ENCODE measurements at regions of chr1 and their contacts with region 1.

Region 1: GRCh38 chr1:23184212-23184934 is 15.7 kb upstream of the LUZP1 start:
- ATAC-seq: peak; percentile 19 to 79 (median 38)
- H3K4me3 ChIP-seq: no peak overlapping the region
- H3K27ac ChIP-seq: no peak overlapping the region
- H3K4me1 ChIP-seq: no peaks in the 10 kb centered on the region

Region 2: GRCh38 chr1:22673486-22674409 is 510.6 kb before region 1 on chr1:
- in situ Hi-C with region 1: loop called in 4 of 9 experiments (anchors 10 to 25 kb)
- ATAC-seq: peak; percentile 63 to 88 (median 86)
- H3K4me3 ChIP-seq: peak overlapping the region in 1 of 5 donors; percentile 3
- H3K27ac ChIP-seq: peak overlapping the region; percentile 57 to 86
- H3K4me1 ChIP-seq: peaks cover 20 to 29% of the 10 kb centered on the region in 2 donors

Region 3: GRCh38 chr1:22976461-22977243 is 207.7 kb before region 1 on chr1:
- in situ Hi-C with region 1: loop called in 3 of 9 experiments (anchors 10 to 25 kb)
- ATAC-seq: peak; percentile 79 to 96 (median 87)
- H3K4me3 ChIP-seq: no peak overlapping the region
- H3K27ac ChIP-seq: no peak overlapping the region
- H3K4me1 ChIP-seq: peaks cover 5 to 6% of the 10 kb centered on the region in 2 donors

Region 4: GRCh38 chr1:23098463-23099170 is 85.8 kb before region 1 on chr1:
- in situ Hi-C with region 1: loop called in 4 of 9 experiments (anchors 5 to 25 kb)
- ATAC-seq: peak; percentile 29 to 72 (median 54)
- H3K4me3 ChIP-seq: no peak overlapping the region
- H3K27ac ChIP-seq: no peak overlapping the region
- H3K4me1 ChIP-seq: peaks cover 16 to 18% of the 10 kb centered on the region in 2 donors

Region 5: DNA sequence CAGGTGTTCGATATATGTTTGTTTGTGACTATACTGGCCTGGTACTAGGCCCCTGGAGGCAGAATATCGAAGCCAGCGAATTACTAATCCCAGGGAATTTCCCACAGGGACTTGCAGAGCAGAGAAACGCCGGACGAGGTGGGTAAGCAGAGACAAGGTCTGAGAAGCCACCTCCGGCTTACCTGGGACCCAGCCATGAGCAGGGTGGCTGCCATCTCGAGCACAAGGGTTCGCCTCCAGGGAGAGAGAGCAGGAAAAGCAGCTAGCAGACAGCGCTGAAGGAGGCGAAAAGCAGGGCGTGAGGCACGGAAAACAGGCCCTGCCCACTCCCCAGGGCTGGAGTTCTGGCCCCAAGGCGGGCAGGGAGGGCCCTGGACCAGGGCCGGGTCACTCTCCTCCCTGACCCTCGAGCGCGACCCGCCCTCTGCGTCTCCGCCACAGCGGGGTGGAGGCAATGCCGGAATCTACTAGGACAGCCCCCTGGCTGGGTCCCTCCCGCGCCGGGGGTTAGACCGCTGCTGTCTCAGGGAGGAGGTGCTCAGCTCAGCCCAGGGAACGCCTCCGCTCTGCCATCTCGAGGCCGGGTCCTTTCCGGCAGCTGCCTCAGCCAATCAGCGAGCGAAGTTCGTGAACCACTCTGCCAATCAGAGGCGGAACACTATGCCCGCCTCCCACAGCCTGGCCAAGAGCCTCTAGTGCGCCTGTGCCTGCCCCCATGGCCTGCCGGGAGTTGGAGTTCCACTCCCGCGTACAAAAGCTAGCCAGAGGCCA is 183.6 kb after region 1 on chr1:
- in situ Hi-C with region 1: no loop called
- ATAC-seq: peak; percentile 82 to 91 (median 84)
- H3K4me3 ChIP-seq: peak overlapping the region; percentile 60 to 87 (median 76)
- H3K27ac ChIP-seq: peak overlapping the region; percentile 90 to 95
- H3K4me1 ChIP-seq: peaks cover 29 to 32% of the 10 kb centered on the region in 2 donors

Region 6: GRCh38 chr1:23407016-23407634 is 222.8 kb after region 1 on chr1:
- in situ Hi-C with region 1: no loop called
- ATAC-seq: no peak
- H3K4me3 ChIP-seq: no peak overlapping the region
- H3K27ac ChIP-seq: no peak overlapping the region
- H3K4me1 ChIP-seq: peaks cover 18 to 25% of the 10 kb centered on the region in 2 donors

Measured in motor neuron (in vitro differentiated cells).